ENCODE measurements at regions of chr1 and their contacts with region 1.

Region 1: GRCh38 chr1:184386312-184387068 is at the start of gene C1orf21:
- DNase-seq: peak; percentile 92
- ATAC-seq: peak; percentile 95 to 98 (median 96)
- H3K4me3 ChIP-seq: peak within 1 kb of the TSS; percentile 42 to 97 (median 86)
- H3K27ac ChIP-seq: peak within 1 kb of the TSS; percentile 77 to 95 (median 90)
- H3K4me1 ChIP-seq: peaks cover 0 to 43% (median 34%) of the 10 kb centered on the region in 9 donors
- H3K27me3 ChIP-seq: peaks cover 0 to 10% (median 0%) of the 10 kb centered on the region in 7 donors
- CTCF ChIP-seq: no peak
- total RNA-seq, gene C1orf21: 50.8 to 76.7 (median 69.3) TPM

Region 2: DNA sequence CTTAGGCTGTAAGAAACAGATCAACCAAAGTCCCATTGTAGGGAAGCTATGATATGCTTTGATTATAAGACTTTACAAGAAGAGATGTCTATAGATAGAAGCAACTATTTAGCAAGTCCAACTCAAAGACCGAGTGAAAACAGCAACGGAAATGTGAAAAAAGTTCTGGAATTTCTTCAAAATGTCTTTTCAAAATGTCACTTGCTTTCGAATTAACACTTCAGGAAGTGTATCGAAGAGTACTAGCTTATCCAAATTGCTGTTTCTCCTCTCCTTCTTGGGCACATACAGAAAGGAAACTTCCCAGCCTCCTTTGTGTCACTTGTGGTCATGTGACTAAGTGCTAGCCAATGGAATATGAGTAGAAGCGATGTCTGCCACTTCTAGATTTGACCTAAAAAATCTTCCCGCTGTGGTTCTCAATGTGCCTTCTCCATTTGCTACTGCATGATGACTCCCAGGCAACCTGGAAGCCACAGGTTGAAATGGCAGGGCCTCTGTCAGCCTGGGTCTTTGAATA is 245.1 kb before region 1 on chr1:
- intact Hi-C with region 1: no loop called
- DNase-seq: no peak
- ATAC-seq: no peak
- H3K4me3 ChIP-seq: no peak overlapping the region
- H3K27ac ChIP-seq: no peak overlapping the region
- H3K4me1 ChIP-seq: peaks cover 0 to 14% (median 11%) of the 10 kb centered on the region in 9 donors
- H3K27me3 ChIP-seq: no peaks in the 10 kb centered on the region
- CTCF ChIP-seq: no peak

Region 3: DNA sequence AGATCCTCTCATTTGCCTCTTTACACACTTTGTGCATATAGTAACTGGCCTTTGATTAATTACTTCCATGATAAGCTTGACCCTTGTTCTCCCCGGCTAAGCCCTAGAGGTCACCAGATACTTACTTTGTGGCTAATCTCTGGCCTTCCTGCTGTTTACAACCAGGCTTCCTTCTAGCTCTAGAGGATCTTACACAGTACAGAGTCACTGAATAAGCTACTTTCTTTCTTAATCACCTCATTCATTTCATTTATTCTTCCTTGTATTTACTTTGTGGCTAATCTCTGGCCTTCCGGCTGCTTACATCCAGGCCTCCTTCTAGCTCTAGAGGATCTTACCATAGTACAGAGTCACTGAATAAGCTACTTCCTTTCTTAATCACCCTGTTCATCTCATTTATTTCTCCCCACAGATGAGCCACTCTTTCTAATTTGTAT is 144.0 kb before region 1 on chr1:
- intact Hi-C with region 1: loop called in 1 of 10 experiments (anchors 10 kb)
- DNase-seq: peak in 1 of 2 donors; percentile 27
- ATAC-seq: peak; percentile 75 to 95 (median 92)
- H3K4me3 ChIP-seq: no peak overlapping the region
- H3K27ac ChIP-seq: peak overlapping the region in 4 of 10 donors; percentile 6 to 53 (median 45)
- H3K4me1 ChIP-seq: peaks cover 0 to 19% (median 10%) of the 10 kb centered on the region in 9 donors
- H3K27me3 ChIP-seq: no peaks in the 10 kb centered on the region
- CTCF ChIP-seq: peak; percentile 10 to 71 (median 43)

Region 4: DNA sequence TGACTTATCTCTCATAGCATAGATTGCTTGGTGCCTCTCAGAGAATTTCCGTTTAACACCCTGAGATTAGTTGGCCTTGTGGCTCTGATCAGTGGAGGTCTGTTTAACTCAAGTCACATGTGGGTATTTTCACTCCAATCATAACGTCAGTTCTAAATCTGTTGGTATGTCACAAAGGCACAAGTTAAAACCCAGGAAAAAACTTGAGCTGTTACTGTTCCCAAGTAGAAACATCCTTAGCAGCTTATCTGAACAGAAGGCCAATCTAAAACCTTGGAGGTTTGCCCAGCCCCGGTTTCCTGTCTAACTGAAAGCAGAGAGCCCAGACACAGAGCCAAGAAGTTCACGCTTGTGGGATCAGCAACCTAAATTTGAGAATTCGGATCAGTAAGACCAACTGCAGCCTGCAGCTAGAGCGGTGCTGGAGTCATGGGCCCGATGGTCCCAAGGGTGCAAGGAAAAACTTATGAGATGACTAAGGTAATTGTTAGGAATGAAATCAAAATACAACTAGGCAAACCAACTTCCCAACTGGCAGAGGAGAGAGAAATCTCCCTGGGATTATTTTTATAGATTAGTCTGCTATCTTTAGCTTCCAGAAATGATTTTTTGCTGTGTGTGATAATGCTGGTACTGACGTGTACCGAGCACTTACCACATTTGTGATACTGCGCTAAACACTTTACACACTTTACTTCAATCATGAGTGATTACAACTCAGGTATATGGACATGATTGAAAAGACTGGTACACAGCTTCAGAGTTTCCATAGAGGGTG is 89.8 kb before region 1 on chr1:
- intact Hi-C with region 1: loop called in 3 of 10 experiments (anchors 5 kb)
- DNase-seq: peak; percentile 75 to 97
- ATAC-seq: peak; percentile 91 to 95 (median 94)
- H3K4me3 ChIP-seq: peak overlapping the region in 5 of 10 donors; percentile 6 to 26 (median 18)
- H3K27ac ChIP-seq: peak overlapping the region; percentile 57 to 95 (median 82)
- H3K4me1 ChIP-seq: peaks cover 16 to 74% (median 41%) of the 10 kb centered on the region in 9 donors
- H3K27me3 ChIP-seq: no peaks in the 10 kb centered on the region
- CTCF ChIP-seq: no peak

Region 5: GRCh38 chr1:184449916-184450315 is 63.4 kb after region 1 on chr1:
- intact Hi-C with region 1: no loop called
- DNase-seq: no peak
- ATAC-seq: peak in 1 of 8 donors; percentile 5
- H3K4me3 ChIP-seq: no peak overlapping the region
- H3K27ac ChIP-seq: no peak overlapping the region
- H3K4me1 ChIP-seq: peaks cover 0 to 50% (median 19%) of the 10 kb centered on the region in 9 donors
- H3K27me3 ChIP-seq: no peaks in the 10 kb centered on the region
- CTCF ChIP-seq: no peak

Region 6: DNA sequence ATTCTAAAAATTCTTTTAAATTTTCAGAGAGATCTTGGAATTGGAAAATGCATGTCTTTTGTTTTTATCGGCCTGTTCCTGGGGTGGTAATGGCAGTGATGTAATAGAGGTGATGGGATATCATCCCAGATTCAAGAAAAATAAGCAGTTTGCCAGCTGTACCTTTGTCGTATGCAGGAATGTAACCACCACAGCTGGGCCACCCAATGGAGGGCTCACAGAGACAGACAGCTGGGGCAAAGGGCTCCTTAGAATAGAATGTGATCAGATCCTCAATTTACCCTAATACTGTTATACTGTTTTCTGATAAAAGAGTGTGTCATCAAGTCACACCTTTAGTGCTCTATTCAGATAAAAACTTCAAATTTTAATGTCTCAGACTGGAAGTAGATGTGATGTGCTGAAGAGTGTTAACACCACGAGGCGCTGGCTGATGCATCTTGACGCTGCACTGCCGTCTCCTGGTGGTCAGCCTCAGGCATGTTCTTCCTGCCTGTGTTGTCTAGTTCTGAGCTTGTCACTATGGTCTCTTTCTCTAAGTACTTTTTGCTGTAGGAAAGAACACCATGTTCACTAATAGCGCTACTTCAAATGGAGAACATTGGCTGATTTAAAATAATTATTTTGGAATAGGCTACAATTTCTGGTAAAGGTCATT is 79.1 kb after region 1 on chr1:
- intact Hi-C with region 1: loop called in 4 of 10 experiments (anchors 1 to 5 kb)
- DNase-seq: peak in 1 of 2 donors; percentile 39
- ATAC-seq: peak in 7 of 8 donors; percentile 48 to 84 (median 66)
- H3K4me3 ChIP-seq: no peak overlapping the region
- H3K27ac ChIP-seq: peak overlapping the region in 4 of 10 donors; percentile 10 to 24 (median 18)
- H3K4me1 ChIP-seq: peaks cover 7 to 84% (median 36%) of the 10 kb centered on the region in 9 donors
- H3K27me3 ChIP-seq: no peaks in the 10 kb centered on the region
- CTCF ChIP-seq: peak in 8 of 9 donors; percentile 16 to 64 (median 40)

Region 7: GRCh38 chr1:184622136-184622823 is 235.8 kb after region 1 on chr1:
- intact Hi-C with region 1: loop called in 1 of 10 experiments (anchors 5 kb)
- DNase-seq: peak; percentile 65 to 77
- ATAC-seq: peak; percentile 75 to 91 (median 84)
- H3K4me3 ChIP-seq: peak overlapping the region in 1 of 10 donors; percentile 4
- H3K27ac ChIP-seq: peak overlapping the region; percentile 41 to 94 (median 78)
- H3K4me1 ChIP-seq: peaks cover 14 to 72% (median 69%) of the 10 kb centered on the region in 9 donors
- H3K27me3 ChIP-seq: no peaks in the 10 kb centered on the region
- CTCF ChIP-seq: peak in 3 of 9 donors; percentile 8 to 32 (median 16)

Region 8: DNA sequence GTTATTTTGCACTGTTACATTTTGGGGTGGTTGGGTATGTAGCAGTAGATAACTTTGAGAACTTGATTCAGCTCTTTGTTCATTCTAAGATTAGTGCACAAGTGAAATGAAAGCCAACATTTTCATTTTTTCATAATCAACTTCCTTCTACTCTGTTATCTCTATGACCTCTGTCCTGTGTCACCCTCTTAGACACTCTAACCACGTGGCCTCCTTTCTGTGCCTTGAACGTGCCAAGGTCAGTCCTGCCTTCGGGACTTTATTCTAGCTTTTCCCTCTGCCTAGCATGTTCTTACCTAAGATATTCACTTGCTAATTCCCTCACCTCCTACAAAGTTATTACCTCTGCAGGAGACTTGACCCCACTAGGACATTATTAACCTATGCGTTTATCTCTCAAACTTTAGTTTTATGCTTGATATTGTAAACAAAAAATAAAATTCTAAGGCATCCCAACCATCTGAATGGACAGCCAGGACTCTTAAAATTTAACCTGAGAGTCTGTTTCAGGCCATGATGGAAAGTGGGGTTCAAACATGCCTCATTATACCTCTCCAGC is 387.4 kb after region 1 on chr1:
- intact Hi-C with region 1: no loop called
- DNase-seq: no peak
- ATAC-seq: peak in 1 of 8 donors; percentile 50
- H3K4me3 ChIP-seq: no peak overlapping the region
- H3K27ac ChIP-seq: no peak overlapping the region
- H3K4me1 ChIP-seq: no peaks in the 10 kb centered on the region
- H3K27me3 ChIP-seq: no peaks in the 10 kb centered on the region
- CTCF ChIP-seq: no peak